GM10248 (cell line): ENCODE measurements at regions of chr9 and their contacts with region 1.

Region 1: GRCh38 chr9:113199683-113200329 is 21.3 kb downstream of the FKBP15 start:
- DNase-seq: no peak
- CTCF ChIP-seq: no peak

Region 2: DNA sequence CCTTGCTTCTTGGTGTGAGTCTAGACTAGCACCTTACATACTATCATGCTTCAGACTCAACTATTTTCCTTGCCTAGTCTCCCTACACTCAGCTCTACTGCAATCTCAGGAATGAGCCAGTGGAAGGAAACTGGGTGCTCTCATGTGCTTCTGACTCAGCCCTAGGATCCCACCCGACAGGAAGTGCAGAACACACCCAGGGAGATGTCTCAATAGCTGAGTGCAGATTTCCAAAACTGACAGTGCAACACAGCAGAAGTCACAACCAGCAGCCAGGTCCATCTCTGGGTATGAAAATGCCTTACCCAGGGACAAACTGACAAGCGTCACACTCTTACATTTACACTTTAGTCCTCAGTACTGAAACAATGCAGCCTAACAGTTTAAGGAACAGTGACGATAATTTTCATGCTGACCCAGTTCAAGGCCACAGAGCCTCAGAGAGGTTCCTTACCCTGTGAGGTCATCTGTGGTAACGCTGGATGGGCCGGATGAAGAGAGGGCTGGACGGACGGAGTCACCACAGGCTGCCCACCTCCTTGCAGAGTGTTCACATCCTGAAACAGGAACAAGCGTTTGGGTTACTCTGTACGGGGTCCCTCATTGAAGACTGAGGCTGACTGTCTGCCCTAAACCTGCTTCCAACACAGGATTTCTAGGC is 11.7 kb before region 1 on chr9:
- CTCF ChIA-PET with region 1: interaction called, 10 read pairs
- POLR2A ChIA-PET with region 1: no interaction called
- DNase-seq: no peak
- CTCF ChIP-seq: no peak